ENCODE measurements at regions of chr4 and their contacts with region 1.

Region 1: DNA sequence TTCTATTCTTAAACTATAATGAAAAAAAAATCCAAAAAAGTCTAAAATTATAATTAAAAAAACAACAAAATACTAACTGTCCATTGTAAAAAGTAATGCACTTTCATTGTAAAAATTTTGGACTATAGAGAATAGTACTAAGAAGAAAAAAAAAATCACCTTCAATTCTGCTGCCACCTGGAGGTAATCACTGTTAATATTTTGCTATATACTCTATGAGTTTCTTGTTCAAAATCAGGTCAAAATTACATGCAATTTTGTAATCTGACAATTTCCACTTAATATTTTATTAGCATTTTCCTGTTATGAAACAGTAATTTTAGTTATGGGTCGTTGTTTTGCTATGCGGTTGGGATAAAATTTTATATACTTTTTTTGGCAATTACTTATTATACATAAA is 62.0 kb downstream of the HTT start:
- DNase-seq: peak; percentile 41
- H3K4me3 ChIP-seq: no peak overlapping the region
- H3K27ac ChIP-seq: no peak overlapping the region
- H3K4me1 ChIP-seq: no peaks in the 10 kb centered on the region
- H3K27me3 ChIP-seq: no peaks in the 10 kb centered on the region
- CTCF ChIP-seq: peak in 1 of 2 donors; percentile 6
- POLR2A ChIP-seq: no peak

Region 2: DNA sequence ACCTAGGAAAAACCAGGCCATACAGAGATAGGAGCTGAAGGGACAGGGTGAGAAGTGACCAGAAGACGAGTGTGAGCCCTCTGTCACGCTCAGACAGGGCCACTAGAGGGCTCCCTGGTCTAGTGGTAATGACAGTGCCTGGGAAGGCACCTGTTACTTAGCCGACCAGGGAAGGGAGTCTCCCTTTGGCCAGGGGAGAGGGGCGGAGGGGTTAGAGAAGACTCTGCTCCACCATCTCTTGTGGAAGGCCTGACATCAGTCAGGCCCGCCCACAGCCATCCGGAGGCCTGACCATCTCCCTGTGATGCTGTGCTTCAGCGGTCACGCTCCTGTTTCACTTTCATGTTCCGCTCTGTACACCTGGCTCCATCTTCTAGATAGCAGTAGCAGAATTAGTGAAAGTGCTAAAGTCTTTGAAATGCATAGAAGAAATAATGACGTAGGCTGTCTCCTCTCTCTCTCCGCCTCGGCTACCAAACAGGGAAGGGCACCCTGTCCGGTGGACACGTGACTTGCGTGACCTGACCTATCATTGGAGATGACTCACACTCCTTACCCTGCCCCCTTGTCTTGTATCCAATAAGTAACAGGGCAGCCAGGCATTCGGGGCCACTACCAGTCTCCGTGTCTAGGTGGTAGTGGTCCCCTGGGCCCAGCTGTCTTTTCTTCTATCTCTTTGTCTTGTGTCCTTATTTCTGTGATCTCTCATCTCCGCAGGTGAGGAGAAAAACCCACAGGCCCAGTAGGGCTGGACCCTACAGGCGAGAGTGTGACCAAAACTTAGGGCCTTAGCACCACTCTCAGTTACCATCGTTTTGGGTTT is 88.8 kb before region 1 on chr4:
- CTCF ChIA-PET with region 1: interaction called, 7 read pairs
- POLR2A ChIA-PET with region 1: no interaction called
- dilution Hi-C with region 1: no loop called
- intact Hi-C with region 1: loop called (anchors 1 kb)
- DNase-seq: peak; percentile 51
- H3K4me3 ChIP-seq: no peak overlapping the region
- H3K27ac ChIP-seq: no peak overlapping the region
- H3K4me1 ChIP-seq: no peaks in the 10 kb centered on the region
- H3K27me3 ChIP-seq: no peaks in the 10 kb centered on the region
- CTCF ChIP-seq: peak; percentile 52 to 79
- POLR2A ChIP-seq: no peak

Region 3: GRCh38 chr4:3122081-3122563 is 14.3 kb before region 1 on chr4:
- CTCF ChIA-PET with region 1: interaction called, 84 read pairs
- POLR2A ChIA-PET with region 1: no interaction called
- dilution Hi-C with region 1: no loop called
- intact Hi-C with region 1: loop called (anchors 1 kb)
- DNase-seq: peak; percentile 92
- H3K4me3 ChIP-seq: peak overlapping the region in 1 of 3 experiments; percentile 6
- H3K27ac ChIP-seq: peak overlapping the region; percentile 92
- H3K4me1 ChIP-seq: peaks cover 34% of the 10 kb centered on the region
- H3K27me3 ChIP-seq: no peaks in the 10 kb centered on the region
- CTCF ChIP-seq: no peak
- POLR2A ChIP-seq: peak; percentile 37